ENCODE measurements at regions of chr12 and their contacts with region 1.

Region 1: DNA sequence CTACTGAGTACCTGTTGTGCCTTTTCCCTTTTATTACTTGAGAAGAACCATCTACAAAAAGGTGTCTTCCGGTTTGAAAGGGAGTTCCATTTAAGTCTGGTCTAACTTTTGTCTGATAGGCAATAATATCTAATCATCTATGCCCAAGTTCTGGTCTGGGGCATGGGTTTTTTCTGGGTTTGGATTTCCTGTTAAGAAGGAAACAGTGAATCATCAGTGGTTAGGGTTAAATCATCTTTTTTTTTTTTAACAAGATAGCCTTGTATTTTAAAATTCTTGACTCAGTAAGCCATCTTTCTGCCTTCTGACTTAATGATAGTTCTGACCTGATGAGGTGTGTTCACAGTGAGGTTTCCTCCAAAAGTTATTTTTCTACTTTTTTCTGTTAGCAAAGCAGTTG is 29.3 kb upstream of the CPNE8 start:
- DNase-seq: no peak
- H3K4me3 ChIP-seq: no peak overlapping the region
- H3K27ac ChIP-seq: no peak overlapping the region
- H3K4me1 ChIP-seq: no peaks in the 10 kb centered on the region
- H3K27me3 ChIP-seq: no peaks in the 10 kb centered on the region
- CTCF ChIP-seq: no peak
- EP300 ChIP-seq: no peak
- POLR2A ChIP-seq: no peak

Region 2: DNA sequence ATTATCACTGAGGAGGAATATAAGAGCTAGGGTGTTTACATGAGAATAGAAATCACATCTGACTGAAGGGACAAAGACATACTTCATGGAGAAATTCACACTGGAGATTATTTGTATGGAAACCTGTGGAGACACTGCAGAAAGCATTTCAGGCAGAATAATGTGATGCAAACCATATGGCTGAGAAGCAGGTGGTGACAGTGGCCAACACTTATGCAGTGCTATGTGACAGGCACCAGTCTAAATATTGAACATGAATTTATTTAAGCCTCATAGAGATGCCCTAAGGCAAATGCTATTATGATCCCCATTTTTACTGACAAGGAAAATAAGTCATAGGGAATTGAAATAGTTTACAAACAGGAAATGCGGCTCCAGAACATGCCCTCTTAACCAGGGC is 601.9 kb before region 1 on chr12:
- in situ Hi-C with region 1: loop called in 1 of 4 experiments (anchors 25 kb)
- intact Hi-C with region 1: no loop called
- DNase-seq: no peak
- H3K4me3 ChIP-seq: no peak overlapping the region
- H3K27ac ChIP-seq: no peak overlapping the region
- H3K4me1 ChIP-seq: peaks cover 0 to 3% (median 0%) of the 10 kb centered on the region in 4 donors
- H3K27me3 ChIP-seq: no peaks in the 10 kb centered on the region
- CTCF ChIP-seq: no peak
- EP300 ChIP-seq: no peak
- POLR2A ChIP-seq: no peak

Region 3: GRCh38 chr12:39095636-39096330 is 161.1 kb after region 1 on chr12:
- in situ Hi-C with region 1: loop called in 3 of 4 experiments (anchors 10 to 25 kb)
- intact Hi-C with region 1: no loop called
- DNase-seq: no peak
- H3K4me3 ChIP-seq: no peak overlapping the region
- H3K27ac ChIP-seq: no peak overlapping the region
- H3K4me1 ChIP-seq: no peaks in the 10 kb centered on the region
- H3K27me3 ChIP-seq: peaks cover 6% of the 10 kb centered on the region
- CTCF ChIP-seq: no peak
- EP300 ChIP-seq: no peak
- POLR2A ChIP-seq: no peak

Region 4: GRCh38 chr12:40192704-40193255 is 1258.1 kb after region 1 on chr12:
- in situ Hi-C with region 1: no loop called
- intact Hi-C with region 1: no loop called
- DNase-seq: peak; percentile 25
- H3K4me3 ChIP-seq: no peak overlapping the region
- H3K27ac ChIP-seq: no peak overlapping the region
- H3K4me1 ChIP-seq: no peaks in the 10 kb centered on the region
- H3K27me3 ChIP-seq: no peaks in the 10 kb centered on the region
- CTCF ChIP-seq: no peak
- EP300 ChIP-seq: no peak
- POLR2A ChIP-seq: no peak